ENCODE measurements at regions of chr4 and their contacts with region 1.

Region 1: DNA sequence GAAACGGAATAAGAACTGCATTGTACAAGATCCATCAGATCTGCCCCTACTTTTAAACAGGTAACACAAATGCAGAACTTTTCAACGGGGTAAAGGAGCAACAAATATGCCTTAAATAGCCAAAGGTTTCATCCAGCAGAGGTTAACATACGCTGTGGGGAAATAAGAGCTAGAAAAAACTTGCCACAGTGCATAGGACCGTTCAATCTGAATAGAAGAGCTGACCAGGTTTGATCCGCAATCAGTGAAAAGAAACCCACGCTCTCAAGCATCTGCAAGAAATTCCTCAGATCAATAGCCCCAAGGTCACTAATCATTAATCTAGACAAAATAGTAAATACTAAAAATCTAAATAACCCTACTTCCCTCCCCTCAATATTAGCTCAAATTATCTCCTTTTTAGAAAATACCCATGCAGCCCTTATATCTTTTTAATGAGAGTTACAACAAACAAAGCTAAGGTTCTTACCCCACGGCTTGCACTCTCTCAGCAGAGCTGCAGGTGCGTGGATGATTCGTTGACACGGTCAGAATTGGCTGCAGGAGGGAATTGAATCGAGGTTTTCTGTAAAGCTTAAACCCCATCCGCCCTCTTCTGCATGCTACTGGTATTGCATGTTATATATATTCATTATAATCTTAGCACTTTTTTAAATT is at the start of gene TLR10:
- DNase-seq: peak; percentile 41
- ATAC-seq: peak; percentile 53
- H3K4me3 ChIP-seq: no peak within 1 kb of the TSS
- H3K27ac ChIP-seq: no peak within 1 kb of the TSS
- H3K4me1 ChIP-seq: no peaks in the 10 kb centered on the region
- H3K27me3 ChIP-seq: no peaks in the 10 kb centered on the region
- CTCF ChIP-seq: peak; percentile 48
- total RNA-seq, gene TLR10: not detected in 2 replicates

Region 2: DNA sequence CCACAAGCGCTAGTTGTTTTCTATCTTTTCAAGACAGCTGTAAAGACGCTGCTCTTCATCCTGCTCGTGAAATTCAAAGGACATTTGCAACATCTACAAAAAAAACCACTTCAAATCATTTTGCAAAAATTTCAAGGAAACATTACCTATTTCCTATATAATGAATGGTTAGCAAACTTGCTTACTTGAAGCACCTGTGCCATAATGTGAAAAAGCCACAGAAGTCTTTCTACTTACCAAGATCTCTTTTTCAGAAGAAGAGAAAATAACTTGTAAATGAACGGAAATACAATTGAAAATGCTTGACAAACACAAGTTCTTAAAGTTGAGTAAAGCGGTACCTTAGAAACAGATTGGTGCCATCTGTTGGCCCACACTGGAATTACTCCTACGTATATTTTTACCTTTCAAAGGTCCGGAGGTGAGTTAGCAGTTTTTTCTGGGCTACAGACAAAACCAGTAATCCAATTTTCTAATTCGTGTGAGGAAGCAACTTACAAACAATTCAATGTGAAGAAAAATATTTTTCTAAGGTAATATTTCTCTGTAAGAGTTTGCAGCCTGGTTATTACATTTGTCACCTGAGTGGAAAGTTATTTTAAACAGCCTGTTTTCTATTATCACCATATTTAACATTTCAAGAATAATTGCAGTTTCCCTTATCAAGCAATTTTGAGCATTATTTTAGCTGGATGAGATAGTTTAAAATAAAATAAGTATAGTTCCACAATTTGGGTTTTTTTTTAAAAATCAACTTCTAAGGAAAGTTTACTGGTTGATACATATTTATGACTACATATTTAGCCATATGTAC is 74.2 kb after region 1 on chr4 and contains the start of gene TLR6:
- CTCF ChIA-PET with region 1: no interaction called
- POLR2A ChIA-PET with region 1: no interaction called
- intact Hi-C with region 1: loop called (anchors 5 kb)
- DNase-seq: peak; percentile 87
- ATAC-seq: peak; percentile 30; the same call in 1 of the 2 replicates
- H3K4me3 ChIP-seq: peak within 1 kb of the TSS; percentile 69
- H3K27ac ChIP-seq: peak within 1 kb of the TSS; percentile 91
- H3K4me1 ChIP-seq: peaks cover 15% of the 10 kb centered on the region
- H3K27me3 ChIP-seq: no peaks in the 10 kb centered on the region
- CTCF ChIP-seq: peak; percentile 77
- total RNA-seq, gene TLR6: 0.92 and 1.2 TPM in 2 replicates